ENCODE measurements at regions of chr7 and their contacts with region 1.

Region 1: DNA sequence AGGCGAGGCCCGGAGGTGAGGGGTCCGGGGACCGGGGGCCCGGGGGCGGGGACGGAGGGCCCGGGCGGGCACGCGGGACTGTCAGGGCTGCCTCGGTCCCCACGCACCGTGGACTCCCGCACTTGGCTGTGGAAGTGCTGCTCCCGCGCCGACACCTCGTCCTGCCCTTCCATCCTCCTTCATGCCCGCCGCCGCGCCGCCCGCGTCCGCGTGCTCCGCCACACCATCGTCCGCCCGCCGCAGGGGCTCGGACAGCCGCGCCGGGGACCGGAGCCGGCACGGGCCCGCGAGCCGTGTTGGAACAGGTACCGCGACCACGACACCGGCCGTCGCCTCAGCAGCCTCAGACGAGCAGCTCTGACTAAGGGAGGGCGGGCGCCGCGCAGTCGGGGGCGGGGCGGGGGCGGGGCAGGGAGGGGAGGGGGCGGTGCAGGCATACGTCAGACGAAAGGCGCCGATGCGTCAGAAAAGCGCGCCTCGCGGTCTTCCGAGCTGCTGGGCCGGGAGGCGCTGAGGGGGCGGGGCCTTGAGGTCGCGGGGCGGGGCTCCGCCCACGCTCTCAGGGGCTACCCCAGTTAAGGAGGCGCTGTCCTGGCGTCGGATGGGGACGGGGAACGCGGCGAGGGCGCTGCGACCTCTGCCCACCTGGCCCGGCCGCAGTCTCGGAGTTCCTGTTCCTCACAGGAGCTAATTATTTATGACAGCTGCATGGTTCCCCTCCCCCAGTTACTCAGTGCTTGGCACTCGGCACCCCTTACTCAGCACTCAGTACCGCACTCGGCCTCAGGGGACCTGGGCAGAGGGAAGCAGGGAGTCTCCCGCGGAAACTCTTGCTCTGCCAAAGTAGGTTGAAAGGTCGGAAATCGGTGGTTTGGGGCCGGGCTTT is at the start of gene LMBR1:
- DNase-seq: peak; percentile 80
- ATAC-seq: peak; percentile 87
- H3K4me3 ChIP-seq: peak within 1 kb of the TSS; percentile 86
- H3K27ac ChIP-seq: peak within 1 kb of the TSS; percentile 71
- H3K4me1 ChIP-seq: peaks cover 25% of the 10 kb centered on the region
- H3K27me3 ChIP-seq: no peaks in the 10 kb centered on the region
- CTCF ChIP-seq: peak in 2 of 3 experiments; percentile 47 to 59; a peak in 4 of 6 replicates
- EP300 ChIP-seq: no peak; a peak in 1 of 4 replicates
- POLR2A ChIP-seq: peak; percentile 96
- RAD21 ChIP-seq: 0 out of 2 replicates have a peak, but pooled peaks have one; percentile 12
- polyA plus RNA-seq, gene LMBR1: 4.0 to 7.5 TPM

Region 2: DNA sequence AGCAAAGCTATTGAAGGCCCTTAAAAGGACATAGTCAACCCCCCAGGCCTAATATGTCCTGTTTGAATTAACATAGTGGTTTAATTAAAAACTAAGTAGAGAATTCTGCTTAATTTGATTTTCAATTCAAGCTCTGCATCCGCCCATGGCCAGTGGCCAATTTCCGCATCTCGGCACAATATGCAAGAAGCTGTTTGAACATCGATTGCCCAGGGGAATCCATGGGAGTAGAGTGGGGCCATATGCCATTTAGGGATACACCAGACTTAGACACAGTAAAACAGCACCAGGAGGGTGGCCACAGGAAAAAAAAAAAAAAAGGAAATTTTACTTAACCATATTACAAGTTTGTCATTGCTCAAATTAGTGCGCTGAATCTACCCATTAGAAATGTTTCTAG is 100.5 kb before region 1 on chr7:
- CTCF ChIA-PET with region 1: no interaction called
- POLR2A ChIA-PET with region 1: no interaction called
- RAD21 ChIA-PET with region 1: no interaction called
- SMC1A ChIA-PET with region 1: no interaction called
- in situ Hi-C with region 1: no loop called
- intact Hi-C with region 1: no loop called
- DNase-seq: no peak
- ATAC-seq: no peak
- H3K4me3 ChIP-seq: no peak overlapping the region
- H3K27ac ChIP-seq: no peak overlapping the region
- H3K4me1 ChIP-seq: no peaks in the 10 kb centered on the region
- H3K27me3 ChIP-seq: no peaks in the 10 kb centered on the region
- CTCF ChIP-seq: no peak
- EP300 ChIP-seq: no peak
- POLR2A ChIP-seq: no peak
- RAD21 ChIP-seq: no peak

Region 3: GRCh38 chr7:156918635-156919034 is 25.6 kb after region 1 on chr7:
- CTCF ChIA-PET with region 1: no interaction called
- POLR2A ChIA-PET with region 1: interaction called, 6 read pairs
- RAD21 ChIA-PET with region 1: interaction called, 3 read pairs
- SMC1A ChIA-PET with region 1: interaction called, 5 read pairs
- in situ Hi-C with region 1: no loop called
- intact Hi-C with region 1: loop called (anchors 2 kb)
- DNase-seq: no peak
- ATAC-seq: peak; percentile 51
- H3K4me3 ChIP-seq: no peak overlapping the region
- H3K27ac ChIP-seq: no peak overlapping the region
- H3K4me1 ChIP-seq: peaks cover 18% of the 10 kb centered on the region
- H3K27me3 ChIP-seq: no peaks in the 10 kb centered on the region
- CTCF ChIP-seq: no peak
- EP300 ChIP-seq: no peak; a peak in 1 of 4 replicates
- POLR2A ChIP-seq: no peak
- RAD21 ChIP-seq: no peak

Region 4: GRCh38 chr7:156949541-156950380 is 56.7 kb after region 1 on chr7 and contains the start of gene NOM1:
- CTCF ChIA-PET with region 1: interaction called, 3 read pairs
- POLR2A ChIA-PET with region 1: interaction called, 4 read pairs
- RAD21 ChIA-PET with region 1: no interaction called
- SMC1A ChIA-PET with region 1: interaction called, 3 read pairs
- in situ Hi-C with region 1: no loop called
- intact Hi-C with region 1: loop called (anchors 2 kb)
- DNase-seq: peak; percentile 20
- ATAC-seq: peak; percentile 93
- H3K4me3 ChIP-seq: peak within 1 kb of the TSS; percentile 91
- H3K27ac ChIP-seq: peak within 1 kb of the TSS; percentile 74
- H3K4me1 ChIP-seq: peaks cover 2% of the 10 kb centered on the region; the same call in 1 of the 2 replicates
- H3K27me3 ChIP-seq: no peaks in the 10 kb centered on the region; a peak in 1 of 4 replicates
- CTCF ChIP-seq: peak; percentile 70 to 82 (median 72); a peak in 5 of 6 replicates
- EP300 ChIP-seq: no peak
- POLR2A ChIP-seq: peak; percentile 92
- RAD21 ChIP-seq: peak; percentile 55
- polyA plus RNA-seq, gene NOM1: 2.9 to 4.2 TPM

Region 5: GRCh38 chr7:157010588-157011332 is 117.7 kb after region 1 on chr7 and contains the start of gene MNX1:
- CTCF ChIA-PET with region 1: no interaction called
- POLR2A ChIA-PET with region 1: interaction called, 3 read pairs
- RAD21 ChIA-PET with region 1: interaction called, 5 read pairs
- SMC1A ChIA-PET with region 1: no interaction called
- in situ Hi-C with region 1: no loop called
- intact Hi-C with region 1: loop called (anchors 10 kb)
- DNase-seq: no peak
- ATAC-seq: peak; percentile 92
- H3K4me3 ChIP-seq: peak within 1 kb of the TSS; percentile 74
- H3K27ac ChIP-seq: no peak within 1 kb of the TSS
- H3K4me1 ChIP-seq: peaks cover 19% of the 10 kb centered on the region
- H3K27me3 ChIP-seq: peaks cover 0 to 12% of the 10 kb centered on the region in 2 experiments; a peak in 1 of 4 replicates
- CTCF ChIP-seq: no peak
- EP300 ChIP-seq: no peak
- POLR2A ChIP-seq: peak; percentile 55
- RAD21 ChIP-seq: no peak
- polyA plus RNA-seq, gene MNX1: 0.22 TPM in 1 of 2 experiments, not detected in the other

Region 6: GRCh38 chr7:157138424-157139110 is 245.5 kb after region 1 on chr7 and contains the start of gene UBE3C:
- CTCF ChIA-PET with region 1: no interaction called
- POLR2A ChIA-PET with region 1: no interaction called
- RAD21 ChIA-PET with region 1: no interaction called
- SMC1A ChIA-PET with region 1: no interaction called
- in situ Hi-C with region 1: no loop called
- intact Hi-C with region 1: loop called (anchors 5 kb)
- DNase-seq: peak; percentile 59
- ATAC-seq: peak; percentile 90
- H3K4me3 ChIP-seq: peak within 1 kb of the TSS; percentile 89
- H3K27ac ChIP-seq: peak within 1 kb of the TSS; percentile 71
- H3K4me1 ChIP-seq: peaks cover 7% of the 10 kb centered on the region; the same call in 1 of the 2 replicates
- H3K27me3 ChIP-seq: no peaks in the 10 kb centered on the region
- CTCF ChIP-seq: no peak
- EP300 ChIP-seq: no peak
- POLR2A ChIP-seq: peak; percentile 80
- RAD21 ChIP-seq: no peak
- polyA plus RNA-seq, gene UBE3C: 7.9 to 10.8 TPM

Measured in GM12878 (cell line).